Dendritic cell treated with granulocyte-macrophage colony-stimulating factor and Interleukin-4, amounts not matched to agents 40 ng/mL and 50 ng/mL, for 4 days (primary cell): ENCODE measurements at regions of chr6 and their contacts with region 1.

Region 1: GRCh38 chr6:137218917-137219663 is at the start of gene IFNGR1:
- H3K4me3 Mint-ChIP-seq: peak within 1 kb of the TSS; percentile 93
- H3K27ac Mint-ChIP-seq: peak within 1 kb of the TSS; percentile 100
- H3K4me1 Mint-ChIP-seq: peaks cover 66% of the 10 kb centered on the region
- H3K27me3 Mint-ChIP-seq: no peaks in the 10 kb centered on the region

Region 2: GRCh38 chr6:137188855-137189254 is 30.2 kb before region 1 on chr6:
- intact Hi-C with region 1: no loop called
- H3K4me3 Mint-ChIP-seq: no peak overlapping the region
- H3K27ac Mint-ChIP-seq: no peak overlapping the region
- H3K4me1 Mint-ChIP-seq: peaks cover 17% of the 10 kb centered on the region
- H3K27me3 Mint-ChIP-seq: no peaks in the 10 kb centered on the region

Region 3: DNA sequence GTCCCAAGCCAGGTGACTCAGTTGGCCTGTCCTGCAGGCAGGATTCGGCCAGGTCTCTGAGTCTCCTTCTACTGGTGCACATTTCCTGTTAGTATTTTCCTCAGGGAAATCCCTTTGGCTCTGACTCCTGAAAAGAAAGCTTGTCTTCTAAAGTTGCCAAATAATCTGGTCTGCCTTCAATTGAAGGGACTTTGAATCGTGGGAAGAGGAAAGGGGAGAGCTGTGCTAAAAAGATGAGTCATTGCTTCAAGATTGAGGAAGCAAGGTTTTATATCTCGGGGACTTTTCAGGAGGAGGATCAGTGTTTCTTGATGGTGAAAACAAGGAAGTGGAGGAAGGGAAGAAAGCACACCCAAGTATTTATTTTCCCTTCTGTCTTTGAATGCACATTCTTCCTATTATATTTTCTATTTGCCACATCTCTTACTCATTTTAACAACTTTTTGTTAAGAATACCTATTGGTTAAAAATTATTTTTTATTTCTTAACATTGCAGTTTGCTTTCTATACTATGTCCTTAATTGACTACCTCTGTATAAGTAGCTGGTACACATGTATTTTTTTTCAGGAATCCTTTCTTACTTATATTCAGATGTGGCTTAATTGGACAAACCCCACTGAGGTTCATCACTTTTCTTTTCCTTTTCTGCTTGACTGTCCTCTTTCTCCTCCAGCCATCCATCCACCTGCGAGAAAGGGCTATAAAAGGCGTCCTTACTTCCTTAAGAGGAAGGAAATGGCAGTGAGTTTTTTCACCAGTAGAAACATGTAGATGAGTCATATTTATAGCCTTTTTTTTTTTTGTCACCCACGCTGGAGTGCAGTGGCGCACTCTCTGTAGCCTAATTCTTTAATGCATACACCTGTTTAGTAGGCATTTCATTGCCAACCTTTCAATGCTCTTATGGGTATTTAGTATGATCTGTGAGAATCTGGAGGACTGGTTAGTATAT is 15.1 kb after region 1 on chr6:
- intact Hi-C with region 1: loop called (anchors 2 kb)
- H3K4me3 Mint-ChIP-seq: peak overlapping the region; percentile 20
- H3K27ac Mint-ChIP-seq: peak overlapping the region; percentile 84
- H3K4me1 Mint-ChIP-seq: peaks cover 86% of the 10 kb centered on the region
- H3K27me3 Mint-ChIP-seq: no peaks in the 10 kb centered on the region

Region 4: GRCh38 chr6:137271245-137272183 is 52.4 kb after region 1 on chr6:
- intact Hi-C with region 1: loop called (anchors 2 kb)
- H3K4me3 Mint-ChIP-seq: no peak overlapping the region
- H3K27ac Mint-ChIP-seq: no peak overlapping the region
- H3K4me1 Mint-ChIP-seq: peaks cover 11% of the 10 kb centered on the region
- H3K27me3 Mint-ChIP-seq: no peaks in the 10 kb centered on the region